Prostate gland (tissue), 2 donors: ENCODE measurements at regions of chr14 and their contacts with region 1.

Region 1: DNA sequence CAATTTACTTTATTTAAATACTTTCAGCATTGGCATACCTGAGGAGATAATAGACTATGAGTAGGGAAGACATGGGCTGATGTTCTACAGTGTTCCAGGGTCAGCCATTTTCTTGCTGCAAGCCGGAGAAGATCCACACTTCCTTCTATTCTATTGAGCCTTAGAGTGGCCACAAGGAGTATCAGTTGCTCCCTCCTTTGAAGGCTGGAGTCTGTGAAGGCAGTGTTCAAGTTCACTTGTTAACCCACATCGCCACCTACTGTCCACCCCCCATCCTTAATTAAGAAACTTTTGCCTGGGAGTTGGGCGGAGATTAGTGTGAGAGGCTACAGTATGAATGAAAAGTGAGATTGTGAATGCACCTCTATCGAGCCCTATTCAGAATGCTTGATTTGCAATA is 666.6 kb downstream of the NRXN3 start:
- DNase-seq: peak; percentile 22
- H3K4me3 ChIP-seq: no peak overlapping the region
- H3K27ac ChIP-seq: no peak overlapping the region
- H3K4me1 ChIP-seq: no peaks in the 10 kb centered on the region
- H3K27me3 ChIP-seq: no peaks in the 10 kb centered on the region
- CTCF ChIP-seq: peak in 3 of 4 experiments; percentile 14 to 56 (median 29)
- POLR2A ChIP-seq: no peak

Region 2: DNA sequence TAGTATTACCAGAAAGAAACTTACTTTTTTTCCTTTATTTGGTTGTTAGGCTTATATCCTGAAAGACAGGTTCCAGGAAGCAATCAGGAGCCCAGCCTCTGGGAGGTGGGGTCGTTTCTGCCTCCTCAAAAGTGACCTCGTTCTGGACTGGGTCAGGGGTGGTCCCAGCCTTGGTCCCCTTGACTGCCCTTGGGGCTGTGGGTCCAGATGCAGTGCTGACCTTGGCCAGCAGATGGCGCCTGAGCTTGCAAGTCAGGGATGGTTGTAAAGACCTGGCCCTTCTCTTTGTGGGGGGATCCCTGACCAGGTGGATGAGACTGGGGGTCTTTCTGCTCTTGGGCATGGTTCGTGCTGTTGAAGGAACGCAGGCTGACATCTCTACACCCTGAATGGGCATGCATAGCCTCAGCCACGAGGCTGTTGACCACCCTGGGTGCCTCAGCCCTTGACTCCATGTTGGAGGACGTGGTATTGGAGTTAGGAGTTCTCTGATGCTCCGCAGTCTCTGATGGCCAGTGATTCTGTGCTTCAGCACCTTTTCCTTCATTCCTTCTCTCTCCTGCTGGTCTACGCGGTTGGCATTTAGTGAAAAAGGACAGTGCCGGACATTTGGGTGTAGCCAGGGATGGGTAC is 974.5 kb before region 1 on chr14:
- intact Hi-C with region 1: loop called (anchors 10 kb)
- DNase-seq: peak; percentile 43
- H3K4me3 ChIP-seq: no peak overlapping the region
- H3K27ac ChIP-seq: no peak overlapping the region
- H3K4me1 ChIP-seq: no peaks in the 10 kb centered on the region
- H3K27me3 ChIP-seq: no peaks in the 10 kb centered on the region
- CTCF ChIP-seq: peak; percentile 75 to 87 (median 86)
- POLR2A ChIP-seq: no peak

Region 3: DNA sequence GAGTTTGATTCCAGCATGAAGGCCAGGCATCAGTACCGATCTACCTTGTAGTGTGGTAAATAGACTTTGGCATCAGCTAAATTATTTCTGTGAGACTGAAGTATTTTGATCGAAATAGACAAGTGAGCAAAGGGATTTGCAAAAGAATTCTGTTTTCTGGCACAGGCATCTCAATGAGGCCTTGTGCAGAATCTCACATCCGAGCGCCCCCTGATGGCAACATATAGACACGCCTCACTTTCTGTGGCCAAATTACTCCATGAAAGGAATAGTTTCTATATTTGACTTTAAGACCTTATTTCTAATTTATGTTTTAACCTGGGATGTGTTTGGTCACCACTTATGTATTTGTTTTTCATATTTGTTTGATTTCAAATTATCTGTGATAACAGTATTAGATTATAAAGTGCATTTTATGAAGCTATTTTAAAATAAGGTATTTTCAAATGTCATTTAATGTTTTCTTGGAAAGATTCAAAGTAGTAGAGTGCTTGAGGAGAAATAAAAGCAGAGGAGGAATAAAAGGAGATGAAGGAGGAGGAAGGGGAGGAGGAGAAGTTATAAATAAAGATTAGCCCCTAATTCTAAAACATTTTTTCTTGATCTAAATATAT is 65.3 kb after region 1 on chr14:
- intact Hi-C with region 1: no loop called
- DNase-seq: peak; percentile 9
- H3K4me3 ChIP-seq: no peak overlapping the region
- H3K27ac ChIP-seq: no peak overlapping the region
- H3K4me1 ChIP-seq: no peaks in the 10 kb centered on the region
- H3K27me3 ChIP-seq: no peaks in the 10 kb centered on the region
- CTCF ChIP-seq: peak in 1 of 4 experiments; percentile 34
- POLR2A ChIP-seq: no peak

Region 4: GRCh38 chr14:78933948-78934524 is 97.3 kb after region 1 on chr14:
- intact Hi-C with region 1: no loop called
- DNase-seq: no peak
- H3K4me3 ChIP-seq: no peak overlapping the region
- H3K27ac ChIP-seq: no peak overlapping the region
- H3K4me1 ChIP-seq: no peaks in the 10 kb centered on the region
- H3K27me3 ChIP-seq: no peaks in the 10 kb centered on the region
- CTCF ChIP-seq: peak in 1 of 4 experiments; percentile 43
- POLR2A ChIP-seq: no peak